ENCODE measurements at regions of chr17 and their contacts with region 1.

Region 1: GRCh38 chr17:17823433-17824118 is 13.2 kb downstream of the SREBF1 start:
- DNase-seq: peak; percentile 86
- ATAC-seq: peak; percentile 77
- H3K4me3 Mint-ChIP-seq: peak overlapping the region; percentile 75
- H3K27ac Mint-ChIP-seq: peak overlapping the region; percentile 97
- H3K4me1 Mint-ChIP-seq: peaks cover 95% of the 10 kb centered on the region
- H3K27me3 Mint-ChIP-seq: no peaks in the 10 kb centered on the region
- CTCF ChIP-seq: no peak

Region 2: DNA sequence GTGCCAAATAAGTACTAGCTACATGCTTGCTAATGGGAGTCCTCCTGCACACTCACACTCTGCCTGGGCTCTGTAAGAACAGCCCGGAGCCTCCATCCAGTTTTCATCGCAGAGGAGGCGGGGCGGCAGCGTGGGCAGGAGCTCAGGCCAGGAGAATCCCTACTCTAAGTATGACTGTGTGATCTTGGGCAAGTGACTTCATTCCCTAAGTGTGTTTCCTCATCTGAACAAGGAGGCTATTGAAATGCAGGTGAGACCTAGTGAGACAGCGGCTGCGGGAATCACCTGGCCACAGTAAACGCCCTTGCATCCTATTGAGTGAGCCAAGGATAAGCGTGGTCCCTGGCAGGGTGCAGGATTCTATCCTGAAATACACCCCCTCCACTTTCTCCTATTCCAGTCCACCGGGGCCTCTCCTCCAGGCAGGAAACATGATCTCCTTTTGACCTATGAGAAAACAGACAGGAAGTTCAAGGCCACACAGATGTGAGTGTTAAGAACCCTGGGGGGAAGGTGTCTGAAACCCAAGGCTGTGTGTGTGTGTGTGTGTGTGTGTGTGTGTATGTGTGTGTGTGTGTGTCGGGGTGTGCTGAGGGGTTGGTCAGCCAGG is 147.5 kb before region 1 on chr17:
- CTCF ChIA-PET with region 1: no interaction called
- POLR2A ChIA-PET with region 1: no interaction called
- intact Hi-C with region 1: no loop called
- DNase-seq: peak; percentile 68
- ATAC-seq: peak; percentile 64
- H3K4me3 Mint-ChIP-seq: no peak overlapping the region
- H3K27ac Mint-ChIP-seq: peak overlapping the region; percentile 39
- H3K4me1 Mint-ChIP-seq: peaks cover 29% of the 10 kb centered on the region
- H3K27me3 Mint-ChIP-seq: no peaks in the 10 kb centered on the region
- CTCF ChIP-seq: no peak

Region 3: DNA sequence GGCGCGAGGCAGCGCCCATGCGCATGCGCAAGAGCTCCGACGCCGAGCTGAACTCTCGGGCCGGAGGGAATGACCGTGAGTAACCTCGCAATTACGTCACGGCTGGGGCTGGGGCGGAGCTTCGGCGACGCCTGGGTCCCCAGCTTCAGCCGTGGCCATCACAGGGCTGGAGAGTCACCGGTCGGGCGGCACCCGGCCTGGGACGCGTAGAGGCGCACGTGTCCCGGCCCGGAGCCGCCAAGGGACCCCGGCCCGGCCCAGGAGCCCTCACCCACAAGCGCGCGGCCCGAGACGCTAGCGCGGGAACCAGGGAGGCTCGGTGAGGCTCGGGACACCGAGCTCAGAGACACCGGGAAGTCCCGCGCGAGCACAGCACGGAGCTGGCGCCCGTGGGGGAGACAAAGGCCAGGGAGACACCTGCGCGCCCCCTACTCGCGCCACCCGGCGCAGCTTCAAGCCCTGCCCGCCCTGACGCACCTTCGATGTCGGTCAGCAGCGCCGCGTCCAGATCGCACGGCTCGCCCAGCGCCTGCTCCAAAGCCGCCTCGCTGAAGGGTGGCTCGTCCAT is 12.8 kb after region 1 on chr17:
- CTCF ChIA-PET with region 1: interaction called, 7 read pairs
- POLR2A ChIA-PET with region 1: interaction called, 617 read pairs
- intact Hi-C with region 1: no loop called
- DNase-seq: peak; percentile 98
- ATAC-seq: peak; percentile 72
- H3K4me3 Mint-ChIP-seq: peak overlapping the region; percentile 92
- H3K27ac Mint-ChIP-seq: peak overlapping the region; percentile 96
- H3K4me1 Mint-ChIP-seq: peaks cover 69% of the 10 kb centered on the region
- H3K27me3 Mint-ChIP-seq: no peaks in the 10 kb centered on the region
- CTCF ChIP-seq: no peak